ENCODE measurements at regions of chr12 and their contacts with region 1.

Region 1: GRCh38 chr12:6890789-6891645 is 13.6 kb upstream of the LRRC23 start:
- DNase-seq: peak; percentile 98 to 100
- ATAC-seq: peak; percentile 99
- H3K4me3 ChIP-seq: peak overlapping the region; percentile 29 to 44
- H3K27ac ChIP-seq: peak overlapping the region; percentile 46 to 78
- H3K4me1 ChIP-seq: no peaks in the 10 kb centered on the region
- H3K27me3 ChIP-seq: no peaks in the 10 kb centered on the region

Region 2: GRCh38 chr12:6735448-6736191 is 155.4 kb before region 1 on chr12:
- intact Hi-C with region 1: no loop called
- DNase-seq: peak in 1 of 2 donors; percentile 71
- ATAC-seq: peak; percentile 80
- H3K4me3 ChIP-seq: no peak overlapping the region
- H3K27ac ChIP-seq: no peak overlapping the region
- H3K4me1 ChIP-seq: no peaks in the 10 kb centered on the region
- H3K27me3 ChIP-seq: no peaks in the 10 kb centered on the region

Region 3: DNA sequence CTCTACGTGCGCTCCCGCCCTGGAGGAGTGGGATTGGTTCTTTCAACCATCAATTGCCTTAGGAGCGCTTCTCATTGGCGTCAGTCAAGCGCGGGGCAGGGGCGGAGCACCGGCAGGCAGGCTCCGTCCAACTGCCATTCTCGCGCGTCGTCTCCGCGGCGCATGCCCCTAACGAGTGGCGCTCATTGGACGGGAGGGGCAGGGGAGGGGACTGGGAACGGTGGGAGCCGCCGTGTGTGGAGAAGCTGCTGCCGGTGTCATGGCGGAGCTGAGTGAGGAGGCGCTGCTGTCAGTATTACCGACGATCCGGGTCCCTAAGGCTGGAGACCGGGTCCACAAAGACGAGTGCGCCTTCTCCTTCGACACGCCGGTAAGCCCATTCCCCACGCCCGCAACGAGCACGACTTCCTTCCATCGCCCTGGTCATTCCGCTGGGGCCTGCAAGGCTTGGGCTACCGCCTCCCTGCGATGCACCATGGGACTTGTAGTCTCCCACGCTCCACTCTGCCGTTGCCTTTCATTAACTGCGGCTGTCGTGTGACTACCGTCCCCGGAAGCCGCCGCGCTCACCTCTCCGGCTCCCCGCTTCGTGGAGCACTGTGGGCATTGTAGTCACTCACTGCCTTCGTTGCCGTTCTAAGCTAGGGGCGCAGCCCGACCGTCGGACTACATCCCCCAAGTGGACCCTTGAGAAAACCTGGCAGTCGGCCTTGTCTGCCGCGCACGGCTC is 38.9 kb before region 1 on chr12 and contains the start of gene USP5:
- intact Hi-C with region 1: loop called in 1 of 2 experiments (anchors 2 kb)
- DNase-seq: peak; percentile 99 to 100
- ATAC-seq: peak; percentile 96
- H3K4me3 ChIP-seq: peak within 1 kb of the TSS; percentile 58 to 60
- H3K27ac ChIP-seq: peak within 1 kb of the TSS; percentile 58 to 78
- H3K4me1 ChIP-seq: no peaks in the 10 kb centered on the region
- H3K27me3 ChIP-seq: no peaks in the 10 kb centered on the region
- total RNA-seq, gene USP5: 59.5 to 64.6 TPM

Region 4: DNA sequence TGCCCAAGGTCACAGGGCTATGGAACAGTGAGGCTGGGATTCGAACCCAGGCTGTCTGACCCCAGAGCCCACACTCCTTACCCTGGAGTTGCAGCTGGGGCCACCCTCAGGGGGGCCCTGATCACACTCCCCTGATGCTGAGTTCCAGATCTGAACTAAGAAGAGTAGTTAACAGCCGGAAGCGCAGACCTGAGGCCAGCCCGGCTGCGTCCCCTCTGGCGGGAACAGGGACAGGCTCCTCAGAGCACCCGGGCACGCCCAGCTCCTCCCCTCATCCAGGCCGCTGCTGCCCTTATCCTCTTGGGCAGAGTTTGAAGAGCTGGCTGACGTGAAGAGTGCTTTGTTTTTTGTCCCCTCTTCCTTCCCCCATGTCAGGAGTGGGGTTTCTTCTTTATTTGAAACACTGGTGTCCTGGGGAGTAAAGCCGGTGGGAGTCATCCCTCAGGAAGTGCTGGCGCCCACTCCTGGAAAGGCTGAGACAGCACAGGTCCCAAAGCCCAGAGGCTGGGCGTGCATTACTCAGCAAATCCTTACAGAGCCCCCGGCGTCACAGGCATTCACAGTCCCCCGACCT is 70.8 kb after region 1 on chr12:
- intact Hi-C with region 1: no loop called
- DNase-seq: peak in 1 of 2 donors; percentile 87
- ATAC-seq: no peak
- H3K4me3 ChIP-seq: no peak overlapping the region
- H3K27ac ChIP-seq: no peak overlapping the region
- H3K4me1 ChIP-seq: no peaks in the 10 kb centered on the region
- H3K27me3 ChIP-seq: no peaks in the 10 kb centered on the region

Measured in aorta (tissue), 5 donors.